ENCODE measurements at regions of chr4 and their contacts with region 1.

Region 1: DNA sequence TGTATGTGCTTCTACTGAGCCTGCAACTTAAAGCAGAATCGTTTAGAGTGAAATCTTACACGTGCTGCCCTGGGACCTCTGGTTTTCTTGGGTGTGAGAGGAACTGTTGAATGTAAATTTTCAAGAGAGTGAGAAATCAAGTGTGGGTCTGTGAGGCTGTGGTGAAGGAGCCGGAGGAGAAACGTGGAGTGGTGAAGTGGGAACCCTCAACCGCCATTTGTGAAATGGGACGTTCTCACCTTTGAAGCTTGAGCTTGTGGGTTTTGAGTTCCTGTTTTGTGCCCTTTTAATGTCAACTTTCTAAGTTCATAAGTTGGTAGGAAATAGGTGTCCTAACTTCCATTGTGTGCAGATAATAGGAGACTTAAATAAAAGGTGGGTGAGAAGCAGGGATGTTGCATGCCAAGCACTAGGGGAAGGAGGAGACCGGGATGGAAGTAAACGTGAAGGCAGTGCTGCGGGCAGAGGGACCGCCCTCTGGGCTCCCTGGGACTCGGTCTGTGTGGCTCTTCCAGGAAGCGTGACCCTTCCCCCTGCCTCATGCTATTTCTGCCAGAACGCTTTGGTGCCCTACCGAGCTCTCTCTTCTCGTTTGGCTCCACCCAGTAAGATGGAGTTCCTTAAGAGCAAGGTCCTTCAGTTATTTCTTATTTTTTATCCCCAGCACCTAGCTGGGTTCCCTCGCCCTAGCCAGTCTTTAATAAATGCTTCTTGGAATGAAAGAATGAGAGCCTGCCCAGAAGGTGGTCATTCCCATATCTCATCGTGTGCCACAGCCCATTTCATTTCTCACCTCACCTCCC is 56.0 kb downstream of the TMEM131L start:
- DNase-seq: peak; percentile 79
- H3K4me3 Mint-ChIP-seq: peak overlapping the region; percentile 54
- H3K27ac Mint-ChIP-seq: peak overlapping the region; percentile 91
- H3K4me1 Mint-ChIP-seq: peaks cover 88% of the 10 kb centered on the region
- H3K27me3 Mint-ChIP-seq: no peaks in the 10 kb centered on the region

Region 2: GRCh38 chr4:152920768-152921167 is 601.4 kb before region 1 on chr4:
- CTCF ChIA-PET with region 1: no interaction called
- POLR2A ChIA-PET with region 1: no interaction called
- DNase-seq: no peak
- H3K4me3 Mint-ChIP-seq: no peak overlapping the region
- H3K27ac Mint-ChIP-seq: no peak overlapping the region
- H3K4me1 Mint-ChIP-seq: no peaks in the 10 kb centered on the region
- H3K27me3 Mint-ChIP-seq: no peaks in the 10 kb centered on the region

Region 3: GRCh38 chr4:153471691-153472080 is 50.5 kb before region 1 on chr4:
- CTCF ChIA-PET with region 1: interaction called, 16 read pairs
- POLR2A ChIA-PET with region 1: interaction called, 99 read pairs
- DNase-seq: no peak
- H3K4me3 Mint-ChIP-seq: peak overlapping the region; percentile 35
- H3K27ac Mint-ChIP-seq: peak overlapping the region; percentile 81
- H3K4me1 Mint-ChIP-seq: peaks cover 62% of the 10 kb centered on the region
- H3K27me3 Mint-ChIP-seq: no peaks in the 10 kb centered on the region

Region 4: DNA sequence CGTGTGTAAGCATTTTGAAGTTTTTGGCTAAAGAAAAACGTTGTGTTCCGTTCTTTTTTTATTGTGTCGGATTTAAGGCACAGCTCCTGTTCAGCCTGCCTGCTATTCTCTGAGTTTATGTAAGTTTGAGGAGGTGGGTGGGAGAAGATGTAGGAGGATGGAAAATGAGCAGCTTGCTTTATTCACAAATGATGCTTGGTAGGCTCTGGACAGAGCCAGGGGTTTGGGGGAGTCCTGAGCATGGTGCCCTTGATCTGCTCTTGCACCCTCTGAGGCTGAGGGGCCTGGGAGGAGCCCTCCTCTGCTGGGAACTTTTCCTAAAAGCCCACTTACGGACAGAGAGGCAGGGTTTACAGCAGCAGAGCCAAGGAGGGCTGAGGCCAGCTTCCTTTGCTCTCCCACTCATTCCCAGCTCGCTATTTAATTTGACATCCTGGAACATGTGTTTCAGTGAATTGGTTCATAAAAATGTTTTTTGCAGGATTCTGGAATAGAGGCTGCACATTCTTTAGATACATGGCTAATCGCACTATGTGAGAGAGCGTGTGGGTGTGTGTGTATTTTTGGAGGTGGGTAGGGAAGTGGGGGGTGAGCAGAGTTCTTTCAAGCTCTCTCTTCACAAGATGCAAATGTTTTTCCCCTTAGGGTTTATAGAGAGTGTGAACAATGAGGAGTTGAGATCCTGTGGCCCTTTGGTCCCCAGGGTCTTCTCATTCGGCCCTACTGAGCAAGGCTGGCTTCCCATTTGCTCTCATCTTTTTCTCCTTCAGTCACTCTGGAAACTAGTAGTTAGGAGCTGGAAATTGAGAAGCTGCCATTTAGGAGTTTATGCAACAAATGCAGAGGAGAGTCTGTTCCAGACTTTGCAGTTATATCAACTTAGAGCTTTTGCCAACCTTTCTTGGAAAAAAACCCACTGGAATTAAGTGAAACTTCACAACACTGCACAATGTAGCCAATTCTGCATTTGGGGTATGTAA is 23.9 kb before region 1 on chr4:
- CTCF ChIA-PET with region 1: no interaction called
- POLR2A ChIA-PET with region 1: interaction called, 35 read pairs
- DNase-seq: no peak
- H3K4me3 Mint-ChIP-seq: peak overlapping the region; percentile 60
- H3K27ac Mint-ChIP-seq: peak overlapping the region; percentile 91
- H3K4me1 Mint-ChIP-seq: peaks cover 81% of the 10 kb centered on the region
- H3K27me3 Mint-ChIP-seq: no peaks in the 10 kb centered on the region

Region 5: GRCh38 chr4:153573881-153574802 is 51.9 kb after region 1 on chr4:
- CTCF ChIA-PET with region 1: interaction called, 8 read pairs
- POLR2A ChIA-PET with region 1: interaction called, 10 read pairs
- DNase-seq: peak; percentile 77
- H3K4me3 Mint-ChIP-seq: no peak overlapping the region
- H3K27ac Mint-ChIP-seq: peak overlapping the region; percentile 9
- H3K4me1 Mint-ChIP-seq: peaks cover 31% of the 10 kb centered on the region
- H3K27me3 Mint-ChIP-seq: no peaks in the 10 kb centered on the region

Measured in activated CD4-positive, alpha-beta memory T cell treated with anti-CD3 and anti-CD28 coated beads, Interleukin-2, amount 10 ng/mL, durations not matched to agents 7 days and 5 days (primary cell).